ENCODE measurements at regions of chr7 and their contacts with region 1.

Region 1: DNA sequence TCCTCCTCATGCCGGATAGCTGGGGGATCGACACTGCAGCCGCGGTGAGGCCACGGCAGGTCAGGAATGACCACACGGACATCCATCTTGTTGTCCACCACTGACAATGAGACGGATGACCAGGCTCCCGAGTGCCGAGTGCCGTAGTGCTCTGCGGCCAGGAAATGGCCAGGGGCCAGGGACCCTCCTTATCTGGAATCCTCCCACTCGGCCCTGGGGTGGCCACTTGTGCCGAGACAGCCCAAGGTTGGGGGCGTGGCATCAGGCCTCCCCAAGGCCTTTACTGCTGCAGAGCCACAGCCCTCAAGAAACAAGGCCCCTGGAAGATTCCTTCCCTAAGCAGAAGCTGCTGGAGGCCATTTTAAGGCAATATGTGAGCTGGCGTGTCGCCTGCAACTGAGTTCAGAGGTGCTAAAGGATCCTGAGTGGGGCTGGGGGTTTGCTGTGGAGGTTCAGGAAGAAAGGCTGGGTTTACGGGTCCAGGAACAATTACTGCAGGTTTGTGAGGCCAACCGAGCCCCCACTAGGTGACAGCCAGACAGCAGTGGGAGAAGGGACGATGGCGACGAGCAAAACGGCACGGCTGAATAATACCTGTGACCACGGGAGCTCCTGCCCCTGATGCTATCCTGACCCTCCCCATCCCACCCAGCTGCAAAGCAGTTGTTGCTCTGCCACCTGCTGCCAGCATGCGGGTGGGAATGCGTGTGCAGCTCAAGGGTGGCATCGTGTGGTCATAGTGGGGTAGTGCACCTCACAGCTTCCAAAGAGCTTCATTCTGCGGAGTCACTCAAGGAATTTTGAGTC is 31.6 kb upstream of the LEP start:
- DNase-seq: peak; percentile 33 to 47
- ATAC-seq: peak; percentile 56 to 83
- H3K4me3 ChIP-seq: no peak overlapping the region
- H3K27ac ChIP-seq: no peak overlapping the region
- H3K4me1 ChIP-seq: no peaks in the 10 kb centered on the region
- H3K27me3 ChIP-seq: peaks cover 0 to 19% (median 3%) of the 10 kb centered on the region in 3 donors
- CTCF ChIP-seq: peak; percentile 91 to 99 (median 93)
- POLR2A ChIP-seq: no peak

Region 2: GRCh38 chr7:127708788-127709187 is 500.6 kb before region 1 on chr7:
- in situ Hi-C with region 1: loop called (anchors 5 to 10 kb)
- intact Hi-C with region 1: loop called (anchors 1 kb)
- DNase-seq: peak; percentile 38 to 53
- ATAC-seq: peak; percentile 73 to 85
- H3K4me3 ChIP-seq: no peak overlapping the region
- H3K27ac ChIP-seq: no peak overlapping the region
- H3K4me1 ChIP-seq: peaks cover 0 to 4% of the 10 kb centered on the region in 2 donors
- H3K27me3 ChIP-seq: no peaks in the 10 kb centered on the region
- CTCF ChIP-seq: peak; percentile 57 to 77 (median 71)
- POLR2A ChIP-seq: no peak

Region 3: GRCh38 chr7:127717502-127718339 is 491.7 kb before region 1 on chr7:
- in situ Hi-C with region 1: loop called in 3 of 4 experiments (anchors 5 to 10 kb)
- intact Hi-C with region 1: no loop called
- DNase-seq: no peak
- ATAC-seq: no peak
- H3K4me3 ChIP-seq: no peak overlapping the region
- H3K27ac ChIP-seq: no peak overlapping the region
- H3K4me1 ChIP-seq: peaks cover 0 to 4% of the 10 kb centered on the region in 2 donors
- H3K27me3 ChIP-seq: no peaks in the 10 kb centered on the region
- CTCF ChIP-seq: no peak
- POLR2A ChIP-seq: no peak

Region 4: DNA sequence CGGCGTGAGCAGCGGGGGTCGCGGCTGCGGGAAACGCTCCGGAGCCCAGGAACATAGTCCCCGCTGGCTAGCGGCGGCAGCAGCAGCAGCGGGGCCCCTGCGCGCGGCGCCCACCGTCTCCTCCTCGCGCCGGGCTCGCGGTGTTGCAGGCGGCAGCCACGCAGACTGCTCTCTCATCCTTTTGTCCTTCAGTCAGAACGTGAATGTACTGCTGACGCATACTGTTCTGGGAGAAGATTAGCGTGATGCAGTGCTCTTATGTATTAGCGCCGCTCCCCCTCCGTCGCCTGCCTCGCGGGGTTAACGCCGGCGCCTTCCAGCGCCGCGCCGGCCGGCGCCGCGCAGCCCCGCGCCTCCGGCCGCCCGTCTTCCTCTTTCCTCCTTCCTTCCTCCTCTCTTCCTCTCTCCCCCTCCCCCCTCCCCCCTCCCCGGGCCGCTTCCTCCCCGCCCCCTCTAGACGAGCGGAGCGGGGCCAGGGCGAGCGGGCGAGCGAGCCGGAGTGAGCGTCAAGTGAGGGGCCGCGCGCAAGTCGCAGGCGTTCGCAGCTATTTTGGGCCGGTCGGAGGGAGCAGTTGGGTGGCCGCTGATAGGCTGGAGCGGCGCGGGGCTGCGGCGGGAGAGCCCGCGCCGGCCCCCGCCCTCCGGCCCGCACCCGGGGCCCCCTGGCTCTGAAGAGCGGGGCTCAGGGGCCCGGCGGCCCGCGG is 177.4 kb before region 1 on chr7:
- in situ Hi-C with region 1: no loop called
- intact Hi-C with region 1: loop called (anchors 10 kb)
- DNase-seq: peak in 1 of 2 donors; percentile 25
- ATAC-seq: peak; percentile 80 to 90
- H3K4me3 ChIP-seq: peak overlapping the region; percentile 45 to 70 (median 56)
- H3K27ac ChIP-seq: no peak overlapping the region
- H3K4me1 ChIP-seq: peaks cover 3 to 8% of the 10 kb centered on the region in 2 donors
- H3K27me3 ChIP-seq: peaks cover 0 to 3% (median 0%) of the 10 kb centered on the region in 3 donors
- CTCF ChIP-seq: peak in 2 of 5 experiments; percentile 13 to 30
- POLR2A ChIP-seq: peak; percentile 22 to 23

Region 5: DNA sequence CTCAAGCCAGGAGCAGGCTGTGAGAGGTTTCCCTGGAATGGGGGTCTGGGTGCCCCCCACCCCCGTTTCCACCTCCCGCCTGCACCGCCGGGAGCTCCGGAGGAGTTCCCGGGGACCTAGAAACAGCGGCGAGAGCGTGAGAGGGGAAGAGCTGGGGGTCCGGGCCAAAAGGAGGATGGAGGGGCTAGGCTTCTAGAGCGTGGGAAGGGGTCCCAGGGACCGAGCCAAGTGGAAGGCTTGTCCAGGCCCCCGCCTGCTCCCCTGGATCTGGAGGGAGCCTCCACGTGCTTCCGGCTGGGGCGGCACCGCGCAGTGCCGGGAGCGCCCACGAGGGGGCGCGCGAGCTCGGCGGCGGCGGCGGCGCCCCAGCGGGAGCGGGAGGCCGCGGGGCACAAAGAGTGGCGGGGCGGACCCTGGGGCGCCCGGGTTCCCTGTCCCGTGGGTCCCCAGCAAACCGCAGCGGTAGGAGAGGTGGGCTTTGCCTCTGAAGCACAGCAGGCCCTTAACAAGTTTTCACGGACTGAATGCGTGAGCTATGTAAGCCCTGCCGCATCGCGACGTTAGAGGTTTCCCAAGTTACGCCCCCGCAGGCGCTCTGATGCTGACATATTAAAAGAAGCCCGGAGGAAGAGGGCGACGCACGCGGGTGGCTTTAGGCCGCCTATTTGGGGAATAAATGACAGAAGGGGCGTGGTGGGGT is 73.8 kb before region 1 on chr7:
- in situ Hi-C with region 1: loop called in 1 of 4 experiments (anchors 10 kb)
- intact Hi-C with region 1: loop called (anchors 1 kb)
- DNase-seq: no peak
- ATAC-seq: peak; percentile 91 to 92
- H3K4me3 ChIP-seq: peak overlapping the region; percentile 45 to 71 (median 54)
- H3K27ac ChIP-seq: no peak overlapping the region
- H3K4me1 ChIP-seq: peaks cover 0 to 13% of the 10 kb centered on the region in 2 donors
- H3K27me3 ChIP-seq: peaks cover 30 to 54% (median 44%) of the 10 kb centered on the region in 3 donors
- CTCF ChIP-seq: peak; percentile 57 to 98 (median 85)
- POLR2A ChIP-seq: no peak

Measured in gastrocnemius medialis (tissue), 4 donors.